ENCODE measurements at regions of chr20 and their contacts with region 1.

Region 1: GRCh38 chr20:21303061-21303871 is at the start of gene XRN2:
- DNase-seq: peak; percentile 87 to 96 (median 95)
- ATAC-seq: peak; percentile 77
- H3K4me3 ChIP-seq: peak within 1 kb of the TSS; percentile 69 to 92
- H3K4me3 Mint-ChIP-seq: peak within 1 kb of the TSS; percentile 98
- H3K27ac ChIP-seq: peak within 1 kb of the TSS; percentile 93 to 94
- H3K27ac Mint-ChIP-seq: peak within 1 kb of the TSS; percentile 99
- H3K4me1 ChIP-seq: peaks cover 26% of the 10 kb centered on the region
- H3K4me1 Mint-ChIP-seq: peaks cover 25% of the 10 kb centered on the region
- H3K27me3 ChIP-seq: no peaks in the 10 kb centered on the region
- H3K27me3 Mint-ChIP-seq: no peaks in the 10 kb centered on the region
- CTCF ChIP-seq: no peak
- total RNA-seq, gene XRN2: 52.1 to 54.2 TPM

Region 2: GRCh38 chr20:20017001-20017843 is 1286.0 kb before region 1 on chr20 and contains the start of gene NAA20:
- CTCF ChIA-PET with region 1: no interaction called
- POLR2A ChIA-PET with region 1: no interaction called
- intact Hi-C with region 1: loop called in 1 of 2 experiments (anchors 10 kb)
- DNase-seq: peak; percentile 75 to 94 (median 91)
- ATAC-seq: peak; percentile 94
- H3K4me3 ChIP-seq: peak within 1 kb of the TSS; percentile 77 to 89
- H3K4me3 Mint-ChIP-seq: peak within 1 kb of the TSS; percentile 91
- H3K27ac ChIP-seq: peak within 1 kb of the TSS; percentile 63 to 82
- H3K27ac Mint-ChIP-seq: peak within 1 kb of the TSS; percentile 91
- H3K4me1 ChIP-seq: peaks cover 44% of the 10 kb centered on the region
- H3K4me1 Mint-ChIP-seq: peaks cover 53% of the 10 kb centered on the region
- H3K27me3 ChIP-seq: no peaks in the 10 kb centered on the region
- H3K27me3 Mint-ChIP-seq: no peaks in the 10 kb centered on the region
- CTCF ChIP-seq: peak; percentile 58
- total RNA-seq, gene NAA20: 32.9 to 33.2 TPM

Region 3: DNA sequence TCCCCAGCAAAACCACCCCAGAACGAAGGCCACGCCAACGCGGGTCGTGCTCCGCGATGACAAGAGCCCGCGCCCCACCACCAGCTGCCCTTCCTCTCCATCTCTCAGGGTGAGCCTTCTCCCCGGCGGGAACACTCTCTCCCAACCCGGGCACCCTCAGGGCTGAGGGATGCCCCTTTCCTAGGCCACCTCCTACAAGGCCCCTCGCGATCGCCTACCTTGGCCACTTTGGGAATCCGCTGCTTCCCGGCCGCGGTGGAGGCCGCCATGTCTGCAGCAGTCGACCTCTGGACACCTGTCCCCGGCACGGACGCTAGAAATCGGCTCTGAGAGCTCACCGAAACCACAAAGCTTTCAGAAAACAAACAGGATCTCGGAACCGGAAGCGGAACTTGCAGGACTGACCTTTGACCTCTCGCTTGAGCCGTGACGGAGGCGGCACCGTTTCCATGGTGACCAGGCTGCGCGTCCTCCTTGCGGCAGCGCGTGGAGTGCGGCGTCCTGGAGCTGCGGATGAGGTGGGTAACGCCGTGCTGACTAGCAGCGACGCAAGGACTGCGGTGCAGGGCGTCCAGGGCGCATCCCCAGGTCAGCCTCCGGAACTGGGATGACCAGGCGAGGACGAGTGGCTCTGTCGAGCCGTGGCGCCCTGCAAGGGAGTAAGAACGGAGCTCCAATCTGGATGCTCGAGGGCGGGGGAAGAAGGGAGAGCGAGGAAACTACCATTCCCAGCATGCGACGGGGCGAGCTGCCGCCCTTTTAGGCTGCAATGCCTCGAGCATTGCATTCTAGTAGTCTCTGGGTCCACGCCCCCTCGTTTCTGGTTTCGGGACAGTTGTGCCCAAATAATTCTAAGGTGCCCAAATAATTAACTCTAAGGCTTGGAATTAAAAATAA is 1250.9 kb before region 1 on chr20 and contains the starts of genes CFAP61 and CRNKL1:
- CTCF ChIA-PET with region 1: no interaction called
- POLR2A ChIA-PET with region 1: no interaction called
- intact Hi-C with region 1: loop called in 1 of 2 experiments (anchors 5 kb)
- DNase-seq: peak; percentile 93 to 99 (median 98)
- ATAC-seq: peak; percentile 94
- H3K4me3 ChIP-seq: peak within 1 kb of the TSS; percentile 86 to 96
- H3K4me3 Mint-ChIP-seq: peak within 1 kb of the TSS; percentile 99
- H3K27ac ChIP-seq: peak within 1 kb of the TSS; percentile 86 to 92
- H3K27ac Mint-ChIP-seq: peak within 1 kb of the TSS; percentile 98
- H3K4me1 ChIP-seq: peaks cover 12% of the 10 kb centered on the region
- H3K4me1 Mint-ChIP-seq: peaks cover 29% of the 10 kb centered on the region
- H3K27me3 ChIP-seq: no peaks in the 10 kb centered on the region
- H3K27me3 Mint-ChIP-seq: peaks cover 10% of the 10 kb centered on the region
- CTCF ChIP-seq: no peak
- total RNA-seq, gene CFAP61: not detected
- total RNA-seq, gene CRNKL1: 34.1 to 39.7 TPM

Region 4: GRCh38 chr20:20712474-20713243 is 590.6 kb before region 1 on chr20 and contains the start of gene RALGAPA2:
- CTCF ChIA-PET with region 1: no interaction called
- POLR2A ChIA-PET with region 1: no interaction called
- intact Hi-C with region 1: loop called (anchors 2 to 5 kb)
- DNase-seq: peak; percentile 87 to 97 (median 94)
- ATAC-seq: peak; percentile 95
- H3K4me3 ChIP-seq: peak within 1 kb of the TSS; percentile 66 to 89
- H3K4me3 Mint-ChIP-seq: peak within 1 kb of the TSS; percentile 98
- H3K27ac ChIP-seq: peak within 1 kb of the TSS; percentile 59 to 93
- H3K27ac Mint-ChIP-seq: peak within 1 kb of the TSS; percentile 97
- H3K4me1 ChIP-seq: peaks cover 14% of the 10 kb centered on the region
- H3K4me1 Mint-ChIP-seq: peaks cover 30% of the 10 kb centered on the region
- H3K27me3 ChIP-seq: no peaks in the 10 kb centered on the region
- H3K27me3 Mint-ChIP-seq: peaks cover 2% of the 10 kb centered on the region
- CTCF ChIP-seq: no peak
- total RNA-seq, gene RALGAPA2: 15.4 to 17.5 TPM

Region 5: DNA sequence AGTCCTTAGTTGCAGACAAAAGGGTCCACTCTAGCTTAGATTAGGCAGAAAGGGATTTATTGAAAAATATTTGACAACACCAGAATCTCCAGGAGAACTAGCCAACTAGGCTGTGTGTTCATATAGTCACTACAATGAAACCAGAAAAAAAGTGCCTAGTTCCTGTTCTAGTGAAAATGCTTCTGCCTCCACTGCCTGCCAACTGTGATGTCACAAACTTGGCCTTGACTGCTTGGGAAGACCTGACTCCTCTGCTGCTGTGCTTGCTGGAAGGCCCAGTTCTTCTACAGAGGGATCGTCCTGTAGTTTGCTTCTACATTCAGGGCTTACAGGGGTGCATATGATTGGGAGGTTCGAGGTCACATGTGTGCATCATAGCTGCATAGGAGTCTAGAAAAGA is 40.5 kb before region 1 on chr20:
- CTCF ChIA-PET with region 1: no interaction called
- POLR2A ChIA-PET with region 1: no interaction called
- intact Hi-C with region 1: no loop called
- DNase-seq: no peak
- ATAC-seq: no peak
- H3K4me3 ChIP-seq: no peak overlapping the region
- H3K4me3 Mint-ChIP-seq: no peak overlapping the region
- H3K27ac ChIP-seq: no peak overlapping the region
- H3K27ac Mint-ChIP-seq: no peak overlapping the region
- H3K4me1 ChIP-seq: no peaks in the 10 kb centered on the region
- H3K4me1 Mint-ChIP-seq: no peaks in the 10 kb centered on the region
- H3K27me3 ChIP-seq: peaks cover 0 to 4% of the 10 kb centered on the region in 2 experiments
- H3K27me3 Mint-ChIP-seq: peaks cover 12% of the 10 kb centered on the region
- CTCF ChIP-seq: no peak

Region 6: DNA sequence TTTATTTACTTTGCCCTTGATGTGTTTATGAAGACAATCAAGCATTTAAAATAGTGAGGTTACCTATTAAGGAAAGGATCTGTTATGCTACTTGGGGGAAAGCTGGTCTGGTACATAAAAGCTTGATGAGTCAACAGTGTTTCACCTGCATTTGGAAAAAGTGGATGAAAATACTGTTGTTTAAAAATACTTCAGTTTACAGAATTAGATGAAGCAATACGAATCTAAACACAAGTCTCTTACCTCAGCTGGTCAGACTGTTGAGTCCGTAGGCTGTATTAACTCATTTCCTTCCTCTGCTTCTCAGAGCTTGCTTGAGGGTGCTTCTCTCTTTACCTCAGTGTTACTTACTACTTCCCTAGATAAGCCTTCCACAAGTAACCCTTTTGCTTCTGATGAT is 58.0 kb after region 1 on chr20:
- CTCF ChIA-PET with region 1: no interaction called
- POLR2A ChIA-PET with region 1: no interaction called
- intact Hi-C with region 1: loop called in 1 of 2 experiments (anchors 10 kb)
- DNase-seq: no peak
- ATAC-seq: no peak
- H3K4me3 ChIP-seq: no peak overlapping the region
- H3K4me3 Mint-ChIP-seq: no peak overlapping the region
- H3K27ac ChIP-seq: no peak overlapping the region
- H3K27ac Mint-ChIP-seq: no peak overlapping the region
- H3K4me1 ChIP-seq: no peaks in the 10 kb centered on the region
- H3K4me1 Mint-ChIP-seq: no peaks in the 10 kb centered on the region
- H3K27me3 ChIP-seq: no peaks in the 10 kb centered on the region
- H3K27me3 Mint-ChIP-seq: no peaks in the 10 kb centered on the region
- CTCF ChIP-seq: no peak

Region 7: DNA sequence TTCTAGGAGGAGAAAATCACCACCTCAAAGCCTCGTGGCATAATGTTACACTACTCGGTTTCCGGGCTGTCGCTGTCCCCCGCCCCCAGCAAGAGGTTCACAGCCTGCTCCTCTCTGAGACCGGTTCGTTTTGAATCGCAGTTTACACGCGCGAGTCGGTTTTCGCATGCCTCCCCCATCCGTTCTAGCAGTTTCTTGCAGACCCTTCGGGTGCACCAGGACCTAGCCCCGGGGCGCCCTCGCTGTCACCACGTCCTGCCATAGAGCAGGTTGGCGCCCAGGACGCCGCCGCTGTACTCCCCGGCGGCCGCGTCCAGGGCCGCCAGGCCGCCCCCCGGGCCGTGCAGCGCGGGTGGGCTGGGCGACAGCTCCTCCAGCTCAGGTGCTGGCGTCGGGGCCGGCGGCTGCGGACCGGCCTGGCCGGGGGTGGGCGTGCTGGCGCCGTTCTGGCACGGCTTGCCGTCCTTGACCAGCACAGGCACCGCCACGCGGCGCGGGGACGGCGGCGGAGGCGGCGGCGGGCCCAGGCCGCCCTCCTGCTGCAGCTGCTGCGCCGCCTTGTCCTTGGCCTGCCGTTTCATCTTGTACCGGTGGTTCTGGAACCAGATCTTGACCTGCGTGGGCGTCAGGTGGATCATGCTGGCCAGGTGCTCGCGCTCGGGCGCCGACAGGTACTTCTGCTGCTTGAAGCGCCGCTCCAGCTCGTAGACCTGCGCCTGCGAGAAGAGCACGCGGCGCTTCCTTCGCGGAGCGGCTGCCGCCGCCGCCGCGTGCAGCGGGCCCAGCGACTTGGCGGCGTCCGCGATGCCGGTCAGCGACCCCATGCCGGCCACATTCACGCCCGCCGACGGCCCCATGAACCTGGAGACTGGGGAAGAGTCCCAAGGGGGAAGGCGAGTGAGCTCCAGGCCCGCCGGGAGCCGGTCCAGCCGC is 92.7 kb after region 1 on chr20:
- CTCF ChIA-PET with region 1: no interaction called
- POLR2A ChIA-PET with region 1: interaction called, 3 read pairs
- intact Hi-C with region 1: loop called (anchors 2 to 5 kb)
- DNase-seq: peak in 8 of 9 experiments; percentile 11 to 86 (median 64)
- ATAC-seq: peak; percentile 89
- H3K4me3 ChIP-seq: no peak overlapping the region
- H3K4me3 Mint-ChIP-seq: peak overlapping the region; percentile 79
- H3K27ac ChIP-seq: no peak overlapping the region
- H3K27ac Mint-ChIP-seq: no peak overlapping the region
- H3K4me1 ChIP-seq: peaks cover 13% of the 10 kb centered on the region
- H3K4me1 Mint-ChIP-seq: peaks cover 23% of the 10 kb centered on the region
- H3K27me3 ChIP-seq: peaks cover 54 to 58% of the 10 kb centered on the region in 2 experiments
- H3K27me3 Mint-ChIP-seq: peaks cover 71% of the 10 kb centered on the region
- CTCF ChIP-seq: no peak

Measured in CD8-positive, alpha-beta T cell (primary cell).